ENCODE measurements at regions of chr11 and their contacts with region 1.

Region 1: DNA sequence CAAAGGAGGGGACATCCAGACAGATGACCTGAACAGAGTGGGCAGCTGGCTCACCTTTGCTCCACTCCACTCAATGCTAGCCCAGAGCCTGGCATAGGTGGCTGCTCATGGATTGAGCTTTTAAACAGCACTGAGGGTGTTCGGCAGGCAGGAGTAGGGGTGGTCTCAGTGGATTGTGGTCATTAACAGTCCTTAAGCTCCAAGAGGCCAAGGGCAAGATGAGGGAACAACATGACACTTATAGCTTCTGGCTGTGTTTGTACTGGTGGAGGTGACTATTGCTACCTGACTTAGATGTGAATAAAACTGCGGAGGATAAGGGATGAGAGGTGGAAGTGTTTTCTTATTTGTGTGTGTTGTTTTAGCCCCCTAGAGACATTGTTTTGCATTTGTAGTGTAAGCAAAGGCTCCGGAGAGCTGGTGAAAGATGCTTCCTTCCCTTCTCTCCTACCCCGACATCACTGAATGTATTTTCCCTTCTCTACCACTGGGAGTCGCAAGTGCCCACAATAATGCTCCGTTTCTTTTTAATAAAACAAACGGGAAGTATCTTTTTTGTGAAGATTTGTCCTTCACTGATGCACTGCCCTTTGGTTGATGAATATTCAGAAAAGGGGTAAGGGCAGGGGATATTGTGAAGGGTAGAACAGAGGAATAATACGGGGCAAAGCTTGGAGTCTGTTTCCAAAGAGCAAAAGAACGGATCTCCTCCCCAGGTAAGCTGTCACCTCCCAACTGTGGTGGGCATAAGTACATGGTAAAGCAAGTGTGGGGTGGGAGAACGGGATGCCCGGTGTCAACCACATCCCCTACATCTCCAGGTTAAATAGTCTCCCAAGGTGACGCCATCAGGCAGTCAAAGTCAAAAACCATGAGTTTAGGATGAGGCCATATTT is 27.5 kb upstream of the MTNR1B start:
- DNase-seq: peak in 3 of 14 experiments; percentile 17 to 45 (median 21)
- ATAC-seq: no peak
- H3K4me3 ChIP-seq: no peak overlapping the region
- H3K4me3 Mint-ChIP-seq: no peak overlapping the region
- H3K27ac ChIP-seq: no peak overlapping the region
- H3K27ac Mint-ChIP-seq: no peak overlapping the region
- H3K4me1 ChIP-seq: no peaks in the 10 kb centered on the region
- H3K4me1 Mint-ChIP-seq: no peaks in the 10 kb centered on the region
- H3K27me3 ChIP-seq: peaks cover 3% of the 10 kb centered on the region in 2 experiments
- H3K27me3 Mint-ChIP-seq: peaks cover 29% of the 10 kb centered on the region
- CTCF ChIP-seq: peak; percentile 53

Region 2: DNA sequence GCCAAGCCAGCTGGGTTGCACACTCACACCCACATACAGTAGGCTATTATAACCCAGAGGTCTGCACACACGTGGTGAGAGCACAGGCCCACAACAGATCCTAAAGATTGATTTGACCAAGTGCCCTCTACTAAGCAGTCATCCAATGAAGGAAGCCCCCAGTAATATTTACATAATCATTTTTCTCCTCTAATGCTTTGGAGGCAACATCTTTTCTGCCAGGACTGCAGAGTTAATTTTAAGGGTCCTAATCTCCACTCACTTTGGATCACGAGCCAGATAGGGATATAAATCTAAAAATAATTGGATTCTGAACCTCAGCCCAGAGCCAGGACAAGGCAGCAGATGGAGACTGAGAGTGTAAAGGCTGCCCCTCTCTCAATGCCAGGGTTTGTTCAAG is 21.6 kb before region 1 on chr11:
- CTCF ChIA-PET with region 1: no interaction called
- POLR2A ChIA-PET with region 1: no interaction called
- intact Hi-C with region 1: no loop called
- DNase-seq: no peak
- ATAC-seq: no peak
- H3K4me3 ChIP-seq: no peak overlapping the region
- H3K4me3 Mint-ChIP-seq: no peak overlapping the region
- H3K27ac ChIP-seq: no peak overlapping the region
- H3K27ac Mint-ChIP-seq: no peak overlapping the region
- H3K4me1 ChIP-seq: no peaks in the 10 kb centered on the region
- H3K4me1 Mint-ChIP-seq: no peaks in the 10 kb centered on the region
- H3K27me3 ChIP-seq: no peaks in the 10 kb centered on the region
- H3K27me3 Mint-ChIP-seq: peaks cover 4% of the 10 kb centered on the region
- CTCF ChIP-seq: no peak

Region 3: GRCh38 chr11:92954003-92954402 is 12.1 kb after region 1 on chr11:
- CTCF ChIA-PET with region 1: no interaction called
- POLR2A ChIA-PET with region 1: interaction called, 3 read pairs
- intact Hi-C with region 1: loop called (anchors 1 kb)
- DNase-seq: no peak
- ATAC-seq: no peak
- H3K4me3 ChIP-seq: no peak overlapping the region
- H3K4me3 Mint-ChIP-seq: no peak overlapping the region
- H3K27ac ChIP-seq: no peak overlapping the region
- H3K27ac Mint-ChIP-seq: no peak overlapping the region
- H3K4me1 ChIP-seq: no peaks in the 10 kb centered on the region
- H3K4me1 Mint-ChIP-seq: no peaks in the 10 kb centered on the region
- H3K27me3 ChIP-seq: peaks cover 0 to 2% of the 10 kb centered on the region in 2 experiments
- H3K27me3 Mint-ChIP-seq: peaks cover 3% of the 10 kb centered on the region
- CTCF ChIP-seq: no peak

Region 4: GRCh38 chr11:92993004-92993403 is 51.1 kb after region 1 on chr11:
- CTCF ChIA-PET with region 1: no interaction called
- POLR2A ChIA-PET with region 1: no interaction called
- intact Hi-C with region 1: no loop called
- DNase-seq: no peak
- ATAC-seq: no peak
- H3K4me3 ChIP-seq: no peak overlapping the region
- H3K4me3 Mint-ChIP-seq: no peak overlapping the region
- H3K27ac ChIP-seq: no peak overlapping the region
- H3K27ac Mint-ChIP-seq: no peak overlapping the region
- H3K4me1 ChIP-seq: no peaks in the 10 kb centered on the region
- H3K4me1 Mint-ChIP-seq: no peaks in the 10 kb centered on the region
- H3K27me3 ChIP-seq: no peaks in the 10 kb centered on the region
- H3K27me3 Mint-ChIP-seq: no peaks in the 10 kb centered on the region
- CTCF ChIP-seq: no peak

Region 5: GRCh38 chr11:93225662-93226061 is 283.7 kb after region 1 on chr11:
- CTCF ChIA-PET with region 1: no interaction called
- POLR2A ChIA-PET with region 1: no interaction called
- intact Hi-C with region 1: loop called (anchors 1 kb)
- DNase-seq: peak in 3 of 14 experiments; percentile 32 to 42 (median 42)
- ATAC-seq: no peak
- H3K4me3 ChIP-seq: no peak overlapping the region
- H3K4me3 Mint-ChIP-seq: no peak overlapping the region
- H3K27ac ChIP-seq: no peak overlapping the region
- H3K27ac Mint-ChIP-seq: no peak overlapping the region
- H3K4me1 ChIP-seq: no peaks in the 10 kb centered on the region
- H3K4me1 Mint-ChIP-seq: no peaks in the 10 kb centered on the region
- H3K27me3 ChIP-seq: peaks cover 0 to 4% of the 10 kb centered on the region in 2 experiments
- H3K27me3 Mint-ChIP-seq: peaks cover 6% of the 10 kb centered on the region
- CTCF ChIP-seq: peak; percentile 62

Region 6: GRCh38 chr11:93639548-93639947 is 697.6 kb after region 1 on chr11:
- CTCF ChIA-PET with region 1: no interaction called
- POLR2A ChIA-PET with region 1: no interaction called
- intact Hi-C with region 1: loop called in 1 of 2 experiments (anchors 10 kb)
- DNase-seq: no peak
- ATAC-seq: no peak
- H3K4me3 ChIP-seq: no peak overlapping the region
- H3K4me3 Mint-ChIP-seq: no peak overlapping the region
- H3K27ac ChIP-seq: no peak overlapping the region
- H3K27ac Mint-ChIP-seq: no peak overlapping the region
- H3K4me1 ChIP-seq: peaks cover under 1% of the 10 kb centered on the region
- H3K4me1 Mint-ChIP-seq: peaks cover under 1% of the 10 kb centered on the region
- H3K27me3 ChIP-seq: no peaks in the 10 kb centered on the region
- H3K27me3 Mint-ChIP-seq: peaks cover 9% of the 10 kb centered on the region
- CTCF ChIP-seq: no peak